ENCODE measurements at regions of chr11 and their contacts with region 1.

Region 1: DNA sequence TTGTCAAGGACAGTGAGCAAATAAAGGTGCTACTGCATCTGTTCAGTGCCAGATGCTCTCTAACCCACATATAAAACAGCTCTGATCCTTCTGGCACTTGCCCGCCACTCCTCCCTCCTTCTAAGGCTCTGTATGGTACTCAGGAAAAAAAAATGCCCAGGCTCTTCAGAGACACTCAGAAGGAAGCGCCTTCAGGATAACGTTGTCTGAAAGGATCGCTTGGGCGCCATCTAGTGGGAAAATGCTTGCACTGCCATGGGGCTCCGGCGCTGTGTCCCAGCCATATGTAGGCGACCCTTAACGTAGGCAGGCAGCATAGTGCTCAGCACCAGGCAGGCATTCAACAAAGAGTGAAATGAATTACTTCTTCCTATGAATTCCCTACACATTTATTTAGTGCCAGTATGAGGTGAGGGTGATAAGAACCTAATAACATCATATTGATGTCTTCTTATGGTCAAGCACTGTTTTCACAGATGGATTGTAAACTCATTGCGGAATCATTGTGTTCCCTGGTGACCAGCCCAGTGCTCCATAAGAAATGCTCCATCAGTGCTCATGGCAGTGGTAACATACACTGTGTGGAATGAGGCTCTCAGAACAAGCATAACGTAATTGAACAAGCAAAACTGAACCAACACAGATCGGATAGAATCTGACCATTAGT is 39.6 kb downstream of the PAMR1 start:
- DNase-seq: peak; percentile 84
- H3K4me3 Mint-ChIP-seq: no peak overlapping the region
- H3K27ac Mint-ChIP-seq: no peak overlapping the region
- H3K4me1 Mint-ChIP-seq: no peaks in the 10 kb centered on the region
- H3K27me3 Mint-ChIP-seq: peaks cover 34% of the 10 kb centered on the region

Region 2: GRCh38 chr11:34585735-34586487 is 899.9 kb before region 1 on chr11:
- CTCF ChIA-PET with region 1: interaction called, 3 read pairs
- intact Hi-C with region 1: loop called (anchors 2 kb)
- DNase-seq: no peak
- H3K4me3 Mint-ChIP-seq: no peak overlapping the region
- H3K27ac Mint-ChIP-seq: no peak overlapping the region
- H3K4me1 Mint-ChIP-seq: peaks cover 4% of the 10 kb centered on the region
- H3K27me3 Mint-ChIP-seq: peaks cover 16% of the 10 kb centered on the region

Region 3: GRCh38 chr11:34926101-34926830 is 559.5 kb before region 1 on chr11:
- CTCF ChIA-PET with region 1: interaction called, 6 read pairs
- intact Hi-C with region 1: loop called (anchors 1 kb)
- DNase-seq: peak; percentile 22
- H3K4me3 Mint-ChIP-seq: no peak overlapping the region
- H3K27ac Mint-ChIP-seq: no peak overlapping the region
- H3K4me1 Mint-ChIP-seq: peaks cover 17% of the 10 kb centered on the region
- H3K27me3 Mint-ChIP-seq: no peaks in the 10 kb centered on the region

Region 4: DNA sequence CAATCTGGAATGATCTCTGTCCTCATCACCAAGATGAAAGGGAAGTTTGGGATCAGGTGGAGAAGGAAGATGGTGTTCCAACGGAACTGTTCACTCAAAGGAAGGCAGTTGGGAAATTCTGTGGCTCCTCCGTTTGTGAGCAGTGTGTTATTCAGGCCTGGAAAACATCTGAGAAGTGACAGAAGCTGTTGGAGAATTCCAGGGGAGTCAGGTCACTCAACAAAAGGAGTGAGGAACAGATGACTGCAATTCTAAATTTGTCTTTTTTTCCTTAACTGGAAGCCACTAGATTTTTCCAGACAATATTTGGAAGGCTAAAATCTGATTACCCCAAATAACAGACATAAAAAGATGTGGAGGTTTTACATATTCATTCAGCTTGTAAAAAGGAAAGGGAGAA is 239.0 kb before region 1 on chr11:
- CTCF ChIA-PET with region 1: no interaction called
- intact Hi-C with region 1: loop called (anchors 10 kb)
- DNase-seq: no peak
- H3K4me3 Mint-ChIP-seq: no peak overlapping the region
- H3K27ac Mint-ChIP-seq: no peak overlapping the region
- H3K4me1 Mint-ChIP-seq: peaks cover 66% of the 10 kb centered on the region
- H3K27me3 Mint-ChIP-seq: no peaks in the 10 kb centered on the region

Region 5: GRCh38 chr11:35412285-35412684 is 73.5 kb before region 1 on chr11:
- CTCF ChIA-PET with region 1: interaction called, 4 read pairs
- intact Hi-C with region 1: loop called (anchors 2 kb)
- DNase-seq: no peak
- H3K4me3 Mint-ChIP-seq: no peak overlapping the region
- H3K27ac Mint-ChIP-seq: no peak overlapping the region
- H3K4me1 Mint-ChIP-seq: no peaks in the 10 kb centered on the region
- H3K27me3 Mint-ChIP-seq: peaks cover 19% of the 10 kb centered on the region

Region 6: DNA sequence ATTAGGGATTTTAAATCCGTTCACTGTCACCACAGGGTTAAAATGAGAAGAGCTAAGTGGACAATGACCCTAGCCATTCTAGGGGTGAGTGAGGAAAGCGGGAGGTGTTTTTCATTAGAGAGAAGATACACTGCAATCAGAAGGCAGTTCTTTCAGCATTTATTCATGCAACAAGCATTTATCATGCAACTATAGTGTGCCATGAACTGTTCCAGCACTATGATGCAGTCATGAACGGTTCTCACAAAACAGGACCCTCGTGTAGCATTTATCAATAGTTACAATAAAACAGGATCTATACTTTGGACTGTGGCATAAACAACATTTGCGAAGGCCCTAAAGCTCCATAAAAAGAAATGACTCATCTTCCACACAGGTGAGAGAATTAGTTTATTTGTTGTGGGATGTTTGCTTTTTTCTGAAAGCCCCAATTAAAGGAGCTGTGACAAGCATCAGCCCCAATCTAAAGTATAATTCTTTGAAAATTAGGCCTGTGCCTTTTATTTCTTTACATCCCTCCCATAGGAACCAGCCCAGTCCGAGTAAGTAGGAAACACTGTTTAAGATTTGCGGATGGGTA is 11.9 kb before region 1 on chr11:
- CTCF ChIA-PET with region 1: interaction called, 12 read pairs
- intact Hi-C with region 1: no loop called
- DNase-seq: no peak
- H3K4me3 Mint-ChIP-seq: no peak overlapping the region
- H3K27ac Mint-ChIP-seq: no peak overlapping the region
- H3K4me1 Mint-ChIP-seq: peaks cover 3% of the 10 kb centered on the region
- H3K27me3 Mint-ChIP-seq: peaks cover 2% of the 10 kb centered on the region

Region 7: DNA sequence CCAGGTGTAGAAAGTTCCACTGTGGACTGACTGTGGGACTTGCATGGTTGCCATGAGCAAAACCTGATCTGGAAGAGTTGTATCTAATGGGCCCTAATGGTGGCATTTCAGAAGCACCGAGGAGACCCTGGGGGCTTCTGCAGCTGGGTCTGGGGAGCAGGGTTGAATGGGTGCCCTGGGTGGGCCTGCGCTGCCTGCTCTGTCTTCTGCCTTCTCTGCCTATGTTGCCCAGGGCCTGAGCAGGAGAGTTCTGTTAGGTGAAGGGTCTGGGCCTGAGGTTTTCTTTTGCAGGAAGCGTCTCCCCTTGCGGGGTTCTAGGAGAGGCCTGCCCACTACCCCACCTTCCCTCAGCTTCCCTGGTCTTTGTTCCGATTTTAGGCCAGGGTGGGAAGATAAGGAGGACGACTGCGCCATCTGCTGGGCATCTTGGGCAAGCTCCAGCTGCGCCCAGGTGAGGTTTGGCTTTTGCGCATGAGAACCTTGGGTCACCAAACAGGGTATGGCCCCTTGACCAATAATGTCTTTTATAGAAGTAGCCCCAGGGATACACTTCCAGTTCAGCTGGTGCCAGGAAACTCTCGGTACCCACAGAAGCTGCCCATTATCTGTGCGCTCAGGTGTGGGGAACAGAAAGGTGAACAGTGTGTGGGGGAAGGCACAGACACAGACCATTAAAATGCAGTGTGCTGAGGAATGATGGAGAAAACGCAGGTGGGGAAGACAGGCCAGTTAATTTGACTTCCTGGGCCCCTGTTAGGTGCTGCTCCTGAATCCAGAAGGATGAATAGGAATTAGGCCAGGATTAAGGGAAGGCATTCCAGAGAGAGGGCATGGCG is 780.2 kb after region 1 on chr11:
- CTCF ChIA-PET with region 1: interaction called, 3 read pairs
- intact Hi-C with region 1: loop called (anchors 1 kb)
- DNase-seq: peak; percentile 74
- H3K4me3 Mint-ChIP-seq: no peak overlapping the region
- H3K27ac Mint-ChIP-seq: no peak overlapping the region
- H3K4me1 Mint-ChIP-seq: no peaks in the 10 kb centered on the region
- H3K27me3 Mint-ChIP-seq: peaks cover 1% of the 10 kb centered on the region